Right cardiac atrium (tissue), 5 donors: ENCODE measurements at regions of chr6 and their contacts with region 1.

Region 1: GRCh38 chr6:139349464-139350020 is 24.9 kb downstream of the CITED2 start:
- DNase-seq: no peak
- ATAC-seq: no peak
- H3K4me3 ChIP-seq: no peak overlapping the region
- H3K27ac ChIP-seq: no peak overlapping the region
- H3K4me1 ChIP-seq: no peaks in the 10 kb centered on the region
- H3K27me3 ChIP-seq: no peaks in the 10 kb centered on the region

Region 2: GRCh38 chr6:138586638-138587037 is 762.9 kb before region 1 on chr6:
- intact Hi-C with region 1: no loop called
- DNase-seq: no peak
- ATAC-seq: no peak
- H3K4me3 ChIP-seq: no peak overlapping the region
- H3K27ac ChIP-seq: no peak overlapping the region
- H3K4me1 ChIP-seq: no peaks in the 10 kb centered on the region
- H3K27me3 ChIP-seq: no peaks in the 10 kb centered on the region

Region 3: GRCh38 chr6:139134817-139135581 is 214.5 kb before region 1 on chr6 and contains the start of gene HECA:
- intact Hi-C with region 1: loop called in 1 of 4 experiments (anchors 10 kb)
- DNase-seq: peak; percentile 99
- ATAC-seq: peak; percentile 97
- H3K4me3 ChIP-seq: peak within 1 kb of the TSS; percentile 96
- H3K27ac ChIP-seq: peak within 1 kb of the TSS; percentile 93
- H3K4me1 ChIP-seq: peaks cover 8% of the 10 kb centered on the region
- H3K27me3 ChIP-seq: no peaks in the 10 kb centered on the region
- total RNA-seq, gene HECA: 43.7 to 50.9 (median 48.1) TPM

Region 4: GRCh38 chr6:139230391-139230840 is 119.1 kb before region 1 on chr6:
- intact Hi-C with region 1: no loop called
- DNase-seq: no peak
- ATAC-seq: peak in 1 of 2 donors; percentile 43
- H3K4me3 ChIP-seq: no peak overlapping the region
- H3K27ac ChIP-seq: no peak overlapping the region
- H3K4me1 ChIP-seq: no peaks in the 10 kb centered on the region
- H3K27me3 ChIP-seq: no peaks in the 10 kb centered on the region

Region 5: DNA sequence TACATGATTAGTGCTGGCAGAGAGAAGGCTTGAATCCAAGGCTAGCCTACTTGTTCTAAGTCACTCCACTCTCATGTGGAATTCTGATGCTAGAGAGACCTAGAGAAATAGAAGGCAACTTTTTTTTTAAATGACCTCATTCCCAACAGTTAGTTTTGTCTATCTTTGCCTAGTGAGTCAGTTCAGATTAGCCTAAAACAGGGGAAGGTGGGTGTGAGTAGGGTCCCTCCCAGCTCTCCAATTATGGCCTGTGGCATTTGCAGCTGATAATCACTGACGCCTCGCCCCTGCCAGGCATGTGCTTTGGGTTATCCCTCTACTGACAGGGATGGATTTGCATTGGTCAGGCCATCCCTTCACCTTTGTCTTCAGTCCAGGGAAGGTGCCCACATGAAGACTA is 71.4 kb before region 1 on chr6:
- intact Hi-C with region 1: no loop called
- DNase-seq: peak in 1 of 3 donors; percentile 36
- ATAC-seq: peak; percentile 63 to 93
- H3K4me3 ChIP-seq: no peak overlapping the region
- H3K27ac ChIP-seq: no peak overlapping the region
- H3K4me1 ChIP-seq: no peaks in the 10 kb centered on the region
- H3K27me3 ChIP-seq: no peaks in the 10 kb centered on the region

Region 6: GRCh38 chr6:139407718-139408222 is 58.2 kb after region 1 on chr6:
- intact Hi-C with region 1: no loop called
- DNase-seq: no peak
- ATAC-seq: no peak
- H3K4me3 ChIP-seq: no peak overlapping the region
- H3K27ac ChIP-seq: no peak overlapping the region
- H3K4me1 ChIP-seq: no peaks in the 10 kb centered on the region
- H3K27me3 ChIP-seq: no peaks in the 10 kb centered on the region